Left ventricle myocardium superior (tissue), 1 donor: ENCODE measurements at regions of chr10 and their contacts with region 1.

Region 1: GRCh38 chr10:93482145-93482834 is at the start of gene MYOF:
- DNase-seq: peak; percentile 57
- ATAC-seq: peak; percentile 89
- total RNA-seq, gene MYOF: 21.0 TPM

Region 2: GRCh38 chr10:93299606-93300287 is 182.5 kb before region 1 on chr10:
- intact Hi-C with region 1: no loop called
- DNase-seq: no peak
- ATAC-seq: no peak

Region 3: GRCh38 chr10:93376372-93377293 is 105.7 kb before region 1 on chr10:
- intact Hi-C with region 1: loop called (anchors 1 kb)
- DNase-seq: peak; percentile 32
- ATAC-seq: peak; percentile 95